ENCODE measurements at regions of chr6 and their contacts with region 1.

Region 1: DNA sequence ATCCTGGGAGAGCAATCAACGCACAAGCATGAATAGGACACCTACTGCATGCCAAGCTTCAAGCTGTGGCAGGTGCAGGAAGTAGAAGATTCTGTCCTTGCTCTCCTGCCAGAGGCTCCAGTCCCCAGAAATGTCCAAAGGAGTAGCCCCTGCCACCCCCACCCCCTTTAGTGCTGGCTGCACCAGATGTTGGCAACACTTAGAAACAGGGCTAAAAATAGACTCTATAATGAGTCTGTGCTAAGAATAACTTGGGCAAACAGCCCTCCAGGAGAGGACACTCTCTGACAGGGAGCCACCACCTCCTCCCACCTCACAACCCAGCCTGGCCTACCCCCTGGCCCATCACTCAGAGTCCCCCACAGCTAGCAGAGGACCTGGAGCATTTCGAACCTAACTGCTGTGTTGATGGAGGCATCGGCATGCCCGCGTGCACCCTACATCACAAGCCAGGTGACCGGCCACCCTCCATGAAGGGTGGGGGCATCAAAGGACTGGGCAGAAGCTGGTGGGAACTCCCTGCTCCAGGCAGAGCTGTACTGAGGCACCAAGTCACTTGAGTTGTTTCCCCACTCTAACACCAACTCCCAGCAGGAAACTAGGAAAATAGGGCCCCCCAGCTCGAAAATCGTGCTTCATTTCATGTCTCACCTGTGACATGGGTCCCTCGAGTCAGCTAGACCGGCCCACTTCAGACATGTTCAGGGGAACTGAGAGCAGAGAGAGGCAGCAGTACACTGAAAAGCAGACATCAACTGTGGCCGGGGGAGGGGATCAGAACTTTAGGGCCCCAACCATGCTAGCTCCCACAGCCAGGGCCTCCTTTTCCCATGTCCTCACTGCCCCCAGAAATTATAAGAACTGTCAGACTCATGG is 18.7 kb downstream of the TFEB start:
- DNase-seq: no peak
- ATAC-seq: no peak
- H3K4me3 Mint-ChIP-seq: peak overlapping the region; percentile 29
- H3K27ac Mint-ChIP-seq: peak overlapping the region; percentile 78
- H3K4me1 Mint-ChIP-seq: peaks cover 31% of the 10 kb centered on the region
- H3K27me3 Mint-ChIP-seq: no peaks in the 10 kb centered on the region

Region 2: DNA sequence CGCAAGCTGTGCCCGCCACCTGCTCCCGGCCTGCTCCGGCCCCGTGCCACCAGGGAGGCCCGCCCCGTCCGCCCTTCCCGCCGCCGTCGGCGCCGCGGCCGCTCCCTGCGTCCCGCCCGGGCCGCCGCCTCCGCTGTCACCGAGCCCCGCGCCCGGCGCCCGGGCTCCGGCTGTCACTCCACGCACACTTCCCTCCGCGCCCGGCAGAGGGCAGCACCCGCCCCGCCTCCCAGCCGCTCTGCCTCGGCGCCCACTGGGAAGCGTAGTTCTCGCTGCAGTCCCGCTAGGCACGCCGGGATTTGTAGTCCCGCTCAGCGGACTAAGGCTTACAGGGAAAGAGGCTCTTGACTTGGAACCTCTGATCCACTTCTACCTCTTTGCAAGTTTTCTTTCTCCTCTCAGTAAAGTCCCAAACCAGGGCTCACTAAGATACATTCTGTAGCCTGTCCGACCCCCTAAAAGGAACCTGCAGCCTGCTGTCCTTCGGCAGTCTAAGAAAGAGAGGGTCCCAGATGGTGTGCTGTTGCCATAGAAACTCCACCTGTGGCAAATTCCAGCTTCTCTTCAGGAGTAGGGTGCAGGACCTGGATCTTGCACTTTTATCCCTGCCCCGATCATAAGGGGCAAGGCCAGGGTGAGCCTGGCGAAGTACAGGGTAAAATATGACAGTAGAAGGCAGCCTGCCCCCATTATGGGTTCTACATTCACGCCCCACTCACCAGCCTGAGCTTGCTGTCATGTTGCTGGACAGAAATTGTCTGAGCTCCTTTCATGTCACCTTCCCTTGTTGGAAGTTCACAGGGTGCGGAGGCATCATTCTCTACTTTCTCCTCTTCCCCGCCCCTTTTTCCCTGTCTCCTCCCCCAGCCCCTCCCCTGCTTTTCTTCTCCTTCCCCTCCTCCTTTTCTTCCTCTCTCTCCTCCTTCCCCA is 18.9 kb after region 1 on chr6 and contains the start of gene TFEB:
- POLR2A ChIA-PET with region 1: interaction called, 19 read pairs
- DNase-seq: peak; percentile 98
- ATAC-seq: peak; percentile 60
- H3K4me3 Mint-ChIP-seq: peak within 1 kb of the TSS; percentile 78
- H3K27ac Mint-ChIP-seq: peak within 1 kb of the TSS; percentile 75
- H3K4me1 Mint-ChIP-seq: peaks cover 24% of the 10 kb centered on the region
- H3K27me3 Mint-ChIP-seq: no peaks in the 10 kb centered on the region
- total RNA-seq, gene TFEB: 17.6 TPM

Region 3: GRCh38 chr6:41747256-41748101 is 30.7 kb after region 1 on chr6 and contains the start of gene PGC:
- POLR2A ChIA-PET with region 1: no interaction called
- DNase-seq: no peak
- ATAC-seq: no peak
- H3K4me3 Mint-ChIP-seq: no peak within 1 kb of the TSS
- H3K27ac Mint-ChIP-seq: no peak within 1 kb of the TSS
- H3K4me1 Mint-ChIP-seq: no peaks in the 10 kb centered on the region
- H3K27me3 Mint-ChIP-seq: peaks cover 2% of the 10 kb centered on the region
- total RNA-seq, gene PGC: not detected

Measured in activated naive CD8-positive, alpha-beta T cell treated with anti-CD3 and anti-CD28 coated beads, Interleukin-2, amount 10 ng/mL, durations not matched to agents 7 days and 5 days (primary cell).